ENCODE measurements at regions of chr15 and their contacts with region 1.

Region 1: GRCh38 chr15:56491110-56491722 is 26.3 kb upstream of the MNS1 start:
- DNase-seq: peak; percentile 71
- ATAC-seq: peak; percentile 90
- H3K4me3 ChIP-seq: no peak overlapping the region
- H3K27ac ChIP-seq: no peak overlapping the region
- H3K4me1 ChIP-seq: peaks cover 0 to 4% of the 10 kb centered on the region in 2 experiments; a peak in 3 of 4 replicates
- H3K27me3 ChIP-seq: no peaks in the 10 kb centered on the region
- CTCF ChIP-seq: peak; percentile 51 to 94 (median 92); a peak in 5 of 6 replicates
- POLR2A ChIP-seq: no peak
- RAD21 ChIP-seq: peak; percentile 80

Region 2: GRCh38 chr15:56869573-56869972 is 378.4 kb after region 1 on chr15:
- CTCF ChIA-PET with region 1: interaction called, 57 read pairs
- POLR2A ChIA-PET with region 1: no interaction called
- RAD21 ChIA-PET with region 1: interaction called, 5 to 6 read pairs
- intact Hi-C with region 1: loop called (anchors 1 kb)
- DNase-seq: peak; percentile 33
- ATAC-seq: no peak
- H3K4me3 ChIP-seq: no peak overlapping the region
- H3K27ac ChIP-seq: no peak overlapping the region
- H3K4me1 ChIP-seq: peaks cover 6 to 11% of the 10 kb centered on the region in 2 experiments; a peak in 3 of 4 replicates
- H3K27me3 ChIP-seq: no peaks in the 10 kb centered on the region
- CTCF ChIP-seq: peak; percentile 52 to 75 (median 58); a peak in 5 of 6 replicates
- POLR2A ChIP-seq: no peak
- RAD21 ChIP-seq: peak; percentile 80

Region 3: GRCh38 chr15:57251941-57252340 is 760.7 kb after region 1 on chr15:
- CTCF ChIA-PET with region 1: no interaction called
- POLR2A ChIA-PET with region 1: no interaction called
- RAD21 ChIA-PET with region 1: no interaction called
- intact Hi-C with region 1: no loop called
- DNase-seq: no peak
- ATAC-seq: no peak
- H3K4me3 ChIP-seq: no peak overlapping the region
- H3K27ac ChIP-seq: no peak overlapping the region
- H3K4me1 ChIP-seq: no peaks in the 10 kb centered on the region
- H3K27me3 ChIP-seq: no peaks in the 10 kb centered on the region
- CTCF ChIP-seq: no peak
- POLR2A ChIP-seq: no peak
- RAD21 ChIP-seq: no peak

Measured in HCT116 (cell line).